ENCODE measurements at regions of chr2 and their contacts with region 1.

Region 1: GRCh38 chr2:197813093-197813787 is 8.8 kb downstream of the PLCL1 start:
- DNase-seq: no peak
- H3K4me3 Mint-ChIP-seq: no peak overlapping the region
- H3K27ac Mint-ChIP-seq: no peak overlapping the region
- H3K4me1 Mint-ChIP-seq: peaks cover 28% of the 10 kb centered on the region
- H3K27me3 Mint-ChIP-seq: no peaks in the 10 kb centered on the region

Region 2: GRCh38 chr2:197786010-197786877 is 27.0 kb before region 1 on chr2:
- CTCF ChIA-PET with region 1: interaction called, 12 read pairs
- POLR2A ChIA-PET with region 1: no interaction called
- intact Hi-C with region 1: no loop called
- DNase-seq: peak; percentile 77
- H3K4me3 Mint-ChIP-seq: peak overlapping the region; percentile 64
- H3K27ac Mint-ChIP-seq: peak overlapping the region; percentile 2
- H3K4me1 Mint-ChIP-seq: peaks cover 2% of the 10 kb centered on the region
- H3K27me3 Mint-ChIP-seq: peaks cover 3% of the 10 kb centered on the region

Region 3: GRCh38 chr2:197828464-197829135 is 15.4 kb after region 1 on chr2:
- CTCF ChIA-PET with region 1: interaction called, 21 read pairs
- POLR2A ChIA-PET with region 1: no interaction called
- intact Hi-C with region 1: no loop called
- DNase-seq: no peak
- H3K4me3 Mint-ChIP-seq: no peak overlapping the region
- H3K27ac Mint-ChIP-seq: no peak overlapping the region
- H3K4me1 Mint-ChIP-seq: no peaks in the 10 kb centered on the region
- H3K27me3 Mint-ChIP-seq: no peaks in the 10 kb centered on the region

Region 4: GRCh38 chr2:197931661-197932312 is 118.5 kb after region 1 on chr2:
- CTCF ChIA-PET with region 1: no interaction called
- POLR2A ChIA-PET with region 1: no interaction called
- intact Hi-C with region 1: no loop called
- DNase-seq: no peak
- H3K4me3 Mint-ChIP-seq: no peak overlapping the region
- H3K27ac Mint-ChIP-seq: no peak overlapping the region
- H3K4me1 Mint-ChIP-seq: peaks cover 46% of the 10 kb centered on the region
- H3K27me3 Mint-ChIP-seq: no peaks in the 10 kb centered on the region

Measured in activated CD4-positive, alpha-beta memory T cell treated with anti-CD3 and anti-CD28 coated beads for 36 hours (primary cell).